T-cell (primary cell): ENCODE measurements at regions of chr20 and their contacts with region 1.

Region 1: GRCh38 chr20:37007898-37008649 is 56.6 kb upstream of the SAMHD1 start:
- DNase-seq: peak in 30 of 35 experiments; percentile 8 to 77 (median 38)
- ATAC-seq: peak; percentile 93 to 99 (median 99)
- H3K4me3 ChIP-seq: no peak overlapping the region
- H3K4me3 Mint-ChIP-seq: peak overlapping the region in 1 of 3 donors; percentile 1
- H3K27ac ChIP-seq: peak overlapping the region; percentile 55
- H3K27ac Mint-ChIP-seq: peak overlapping the region; percentile 89 to 92
- H3K4me1 ChIP-seq: peaks cover 8 to 12% of the 10 kb centered on the region in 2 experiments
- H3K4me1 Mint-ChIP-seq: peaks cover 24 to 35% (median 34%) of the 10 kb centered on the region in 3 donors
- H3K27me3 ChIP-seq: no peaks in the 10 kb centered on the region
- H3K27me3 Mint-ChIP-seq: no peaks in the 10 kb centered on the region

Region 2: DNA sequence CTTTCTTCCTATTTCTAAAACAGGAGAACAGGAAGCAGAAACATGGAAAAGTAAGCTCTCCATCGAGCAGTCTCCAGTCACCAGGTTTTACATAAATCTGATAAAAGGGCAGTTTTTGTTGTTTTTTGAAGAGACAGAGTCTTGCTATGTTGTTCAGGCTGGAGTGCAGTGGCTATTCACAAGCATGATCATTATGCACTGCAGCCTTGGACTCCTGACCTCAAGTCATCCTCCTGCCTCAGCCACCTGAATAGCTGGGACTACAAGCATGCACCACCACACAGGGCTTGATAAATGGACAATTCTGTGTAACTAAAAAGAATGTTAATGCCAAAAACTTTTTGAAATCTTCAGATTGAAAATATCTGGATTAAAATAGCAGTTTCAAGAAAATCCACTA is 80.4 kb before region 1 on chr20:
- CTCF ChIA-PET with region 1: interaction called in 1 of 2 experiments, 4 read pairs
- POLR2A ChIA-PET with region 1: interaction called in 1 of 2 experiments, 10 read pairs
- DNase-seq: no peak
- ATAC-seq: no peak
- H3K4me3 ChIP-seq: no peak overlapping the region
- H3K4me3 Mint-ChIP-seq: no peak overlapping the region
- H3K27ac ChIP-seq: no peak overlapping the region
- H3K27ac Mint-ChIP-seq: peak overlapping the region; percentile 95 to 97
- H3K4me1 ChIP-seq: peaks cover 10 to 40% of the 10 kb centered on the region in 2 experiments
- H3K4me1 Mint-ChIP-seq: peaks cover 61 to 78% (median 70%) of the 10 kb centered on the region in 3 donors
- H3K27me3 ChIP-seq: no peaks in the 10 kb centered on the region
- H3K27me3 Mint-ChIP-seq: no peaks in the 10 kb centered on the region

Region 3: GRCh38 chr20:37042986-37043972 is 35.2 kb after region 1 on chr20:
- CTCF ChIA-PET with region 1: interaction called, 3 to 10 read pairs
- POLR2A ChIA-PET with region 1: interaction called, 3 to 5 read pairs
- DNase-seq: peak in 25 of 35 experiments; percentile 1 to 53 (median 13)
- ATAC-seq: peak; percentile 79 to 82 (median 80)
- H3K4me3 ChIP-seq: peak overlapping the region; percentile 29 to 50
- H3K4me3 Mint-ChIP-seq: peak overlapping the region; percentile 80 to 84 (median 83)
- H3K27ac ChIP-seq: peak overlapping the region; percentile 89
- H3K27ac Mint-ChIP-seq: peak overlapping the region; percentile 95 to 97
- H3K4me1 ChIP-seq: peaks cover 0 to 22% of the 10 kb centered on the region in 2 experiments
- H3K4me1 Mint-ChIP-seq: peaks cover 25 to 30% (median 28%) of the 10 kb centered on the region in 3 donors
- H3K27me3 ChIP-seq: no peaks in the 10 kb centered on the region
- H3K27me3 Mint-ChIP-seq: no peaks in the 10 kb centered on the region

Region 4: DNA sequence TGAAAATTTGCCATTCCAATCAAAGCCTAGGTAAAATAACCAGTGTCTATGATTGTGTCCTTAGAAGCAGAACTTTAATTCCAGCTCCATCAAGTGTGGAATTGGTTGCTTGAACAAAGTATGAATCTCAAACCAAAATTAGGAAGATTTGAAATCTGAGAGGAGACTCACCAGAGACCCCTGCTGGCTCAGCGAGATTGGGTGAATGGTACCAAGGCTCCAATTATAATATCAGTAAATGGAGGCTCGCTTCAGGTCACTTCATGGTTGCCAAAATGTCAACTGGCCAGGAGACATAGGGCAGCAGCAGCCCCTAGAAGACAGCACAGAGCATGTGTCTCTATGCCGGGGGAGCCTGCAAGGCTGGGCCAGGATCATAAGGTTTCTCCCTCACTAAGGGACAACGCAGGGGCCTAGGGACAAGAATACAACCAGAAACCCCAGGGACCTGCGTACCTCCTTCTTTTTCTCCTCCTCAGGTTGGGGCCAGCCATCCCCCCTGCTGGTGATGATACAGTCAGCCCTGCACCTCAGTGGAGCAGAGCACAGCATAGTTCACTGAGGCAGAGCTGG is 73.7 kb after region 1 on chr20:
- CTCF ChIA-PET with region 1: interaction called, 12 to 71 read pairs
- POLR2A ChIA-PET with region 1: interaction called in 1 of 2 experiments, 18 read pairs
- DNase-seq: peak in 34 of 35 experiments; percentile 17 to 69 (median 48)
- ATAC-seq: peak in 3 of 4 experiments; percentile 70 to 77 (median 75)
- H3K4me3 ChIP-seq: no peak overlapping the region
- H3K4me3 Mint-ChIP-seq: no peak overlapping the region
- H3K27ac ChIP-seq: peak overlapping the region; percentile 38
- H3K27ac Mint-ChIP-seq: peak overlapping the region; percentile 69 to 71
- H3K4me1 ChIP-seq: peaks cover 6 to 15% of the 10 kb centered on the region in 2 experiments
- H3K4me1 Mint-ChIP-seq: peaks cover 23 to 36% (median 30%) of the 10 kb centered on the region in 3 donors
- H3K27me3 ChIP-seq: no peaks in the 10 kb centered on the region
- H3K27me3 Mint-ChIP-seq: no peaks in the 10 kb centered on the region

Region 5: GRCh38 chr20:37095599-37096414 is 87.7 kb after region 1 on chr20 and contains the start of gene RBL1:
- CTCF ChIA-PET with region 1: interaction called, 3 to 31 read pairs
- POLR2A ChIA-PET with region 1: interaction called in 1 of 2 experiments, 5 read pairs
- DNase-seq: peak; percentile 72 to 89 (median 82)
- ATAC-seq: peak; percentile 85 to 88 (median 86)
- H3K4me3 ChIP-seq: peak within 1 kb of the TSS; percentile 72 to 84
- H3K4me3 Mint-ChIP-seq: peak within 1 kb of the TSS; percentile 95 to 99 (median 99)
- H3K27ac ChIP-seq: peak within 1 kb of the TSS; percentile 84
- H3K27ac Mint-ChIP-seq: peak within 1 kb of the TSS; percentile 99 to 100
- H3K4me1 ChIP-seq: peaks cover 3 to 30% of the 10 kb centered on the region in 2 experiments
- H3K4me1 Mint-ChIP-seq: peaks cover 28 to 40% (median 35%) of the 10 kb centered on the region in 3 donors
- H3K27me3 ChIP-seq: no peaks in the 10 kb centered on the region
- H3K27me3 Mint-ChIP-seq: no peaks in the 10 kb centered on the region
- total RNA-seq, gene RBL1: 24.3 to 29.7 (median 28.2) TPM